ENCODE measurements at regions of chr17 and their contacts with region 1.

Region 1: DNA sequence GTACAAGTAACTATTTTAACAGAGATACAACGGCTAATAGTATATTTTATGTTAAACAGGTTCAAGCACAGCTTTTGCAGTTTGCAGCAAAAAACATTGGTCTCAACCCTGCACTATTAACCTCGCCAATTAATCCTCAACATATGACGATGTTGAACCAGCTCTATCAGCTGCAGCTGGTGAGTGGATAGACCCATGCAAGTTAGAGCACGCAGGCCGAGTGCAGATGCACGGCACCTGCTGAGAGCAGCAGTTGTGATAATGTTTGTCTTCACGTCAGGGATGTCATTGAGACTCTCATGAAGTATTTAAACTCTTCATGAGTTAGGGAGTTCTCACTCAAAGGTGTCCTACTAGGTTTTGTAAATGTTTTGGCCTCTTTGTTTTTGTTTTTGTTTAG is 45.6 kb downstream of the TMC6 start:
- DNase-seq: no peak
- H3K4me3 ChIP-seq: no peak overlapping the region
- H3K27ac ChIP-seq: no peak overlapping the region
- H3K4me1 ChIP-seq: no peaks in the 10 kb centered on the region
- CTCF ChIP-seq: no peak

Region 2: GRCh38 chr17:78133971-78134898 is 51.2 kb after region 1 on chr17:
- CTCF ChIA-PET with region 1: no interaction called
- POLR2A ChIA-PET with region 1: interaction called, 4 read pairs
- intact Hi-C with region 1: loop called (anchors 1 kb)
- DNase-seq: peak; percentile 91
- H3K4me3 ChIP-seq: peak overlapping the region; percentile 81
- H3K27ac ChIP-seq: peak overlapping the region; percentile 91
- H3K4me1 ChIP-seq: peaks cover 54% of the 10 kb centered on the region
- CTCF ChIP-seq: peak; percentile 97